Activated naive CD4-positive, alpha-beta T cell treated with anti-CD3 and anti-CD28 coated beads, Interleukin-2, amount 10 ng/mL, durations not matched to agents 7 days and 5 days (primary cell): ENCODE measurements at regions of chr20 and their contacts with region 1.

Region 1: GRCh38 chr20:3820048-3820900 is at the start of gene AP5S1:
- DNase-seq: peak; percentile 95
- H3K4me3 Mint-ChIP-seq: peak within 1 kb of the TSS; percentile 83
- H3K27ac Mint-ChIP-seq: peak within 1 kb of the TSS; percentile 92
- H3K4me1 Mint-ChIP-seq: peaks cover 56% of the 10 kb centered on the region
- H3K27me3 Mint-ChIP-seq: no peaks in the 10 kb centered on the region

Region 2: GRCh38 chr20:3786665-3787323 is 33.5 kb before region 1 on chr20 and contains the start of gene CENPB:
- CTCF ChIA-PET with region 1: interaction called, 52 read pairs
- DNase-seq: peak; percentile 91
- H3K4me3 Mint-ChIP-seq: peak within 1 kb of the TSS; percentile 81
- H3K27ac Mint-ChIP-seq: peak within 1 kb of the TSS; percentile 84
- H3K4me1 Mint-ChIP-seq: peaks cover 52% of the 10 kb centered on the region
- H3K27me3 Mint-ChIP-seq: peaks cover 14% of the 10 kb centered on the region

Region 3: DNA sequence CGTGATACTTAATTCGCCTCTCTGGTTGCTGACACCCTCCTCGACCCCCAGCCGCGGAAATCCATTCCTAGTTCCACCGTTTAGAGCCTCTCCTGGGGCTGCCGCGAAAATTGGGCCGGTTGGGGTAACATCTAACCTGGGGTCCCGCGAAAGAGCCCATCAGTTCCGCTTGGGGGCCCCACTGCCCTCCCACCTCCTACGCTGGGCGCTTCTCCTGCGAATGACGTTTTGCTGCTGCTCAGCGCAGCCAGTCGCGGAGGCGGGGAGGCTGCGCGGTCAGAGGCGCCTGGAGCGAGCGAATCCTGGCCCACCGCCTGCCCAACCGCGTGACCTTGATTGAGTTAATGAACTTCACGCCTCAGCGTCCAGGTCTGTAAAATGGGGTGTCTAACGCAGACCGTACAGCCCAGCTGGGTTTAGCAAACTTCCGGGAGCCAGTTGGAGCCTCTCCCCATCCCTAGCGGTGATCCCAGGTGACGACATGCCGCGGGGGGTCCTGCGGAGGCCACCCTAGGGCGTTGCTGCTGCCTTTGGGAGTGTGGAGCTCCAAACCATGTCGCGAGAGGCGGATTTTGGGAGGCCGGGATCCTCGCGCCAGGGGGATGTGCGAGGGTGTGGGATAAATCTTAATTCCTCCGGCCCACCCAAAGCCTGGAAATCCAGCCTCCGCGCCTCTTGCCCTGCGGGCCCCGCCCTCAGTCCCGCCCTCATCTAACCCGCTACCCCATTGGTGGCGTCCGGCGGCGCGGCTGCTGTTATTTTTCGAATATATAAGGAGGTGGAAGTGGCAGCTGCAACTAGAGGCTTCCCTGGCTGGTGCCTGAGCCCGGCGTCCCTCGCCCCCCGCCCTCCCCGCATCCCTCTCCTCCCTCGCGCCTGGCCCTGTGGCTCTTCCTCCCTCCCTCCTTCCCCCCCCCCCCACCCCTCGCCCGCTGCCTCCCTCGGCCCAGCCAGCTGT is 24.5 kb before region 1 on chr20 and contains the start of gene CDC25B:
- CTCF ChIA-PET with region 1: interaction called, 52 read pairs
- DNase-seq: peak; percentile 97
- H3K4me3 Mint-ChIP-seq: peak within 1 kb of the TSS; percentile 97
- H3K27ac Mint-ChIP-seq: peak within 1 kb of the TSS; percentile 98
- H3K4me1 Mint-ChIP-seq: peaks cover 46% of the 10 kb centered on the region
- H3K27me3 Mint-ChIP-seq: peaks cover 10% of the 10 kb centered on the region

Region 4: DNA sequence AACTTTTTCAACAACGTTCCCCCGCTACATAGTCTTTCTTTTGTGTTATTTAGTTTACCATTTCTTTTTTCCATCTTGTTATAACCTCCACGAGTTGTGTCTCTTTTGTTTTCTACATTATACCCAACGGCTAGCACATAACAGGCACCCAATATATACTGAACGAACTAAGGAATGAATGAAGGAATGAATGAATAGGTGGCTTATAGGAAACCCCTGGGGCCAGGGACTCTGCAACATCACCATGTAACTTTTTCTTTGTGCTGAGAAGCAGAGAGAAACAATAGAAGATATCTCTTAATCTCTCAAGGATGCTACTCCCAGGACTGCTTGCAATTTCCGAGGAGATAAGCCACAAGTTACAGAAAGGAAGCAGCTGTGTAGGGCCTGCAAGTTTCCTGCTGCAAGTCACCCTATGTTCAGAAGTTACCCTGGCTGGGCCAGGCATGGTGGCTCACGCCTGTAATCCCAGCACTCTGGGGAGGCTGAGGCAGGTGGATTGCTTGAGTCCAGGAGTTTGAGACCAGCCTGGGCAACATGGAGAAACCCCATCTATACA is 19.0 kb after region 1 on chr20:
- CTCF ChIA-PET with region 1: interaction called, 10 read pairs
- DNase-seq: no peak
- H3K4me3 Mint-ChIP-seq: no peak overlapping the region
- H3K27ac Mint-ChIP-seq: peak overlapping the region; percentile 26
- H3K4me1 Mint-ChIP-seq: peaks cover 21% of the 10 kb centered on the region
- H3K27me3 Mint-ChIP-seq: no peaks in the 10 kb centered on the region

Region 5: GRCh38 chr20:3854462-3854871 is 34.2 kb after region 1 on chr20:
- CTCF ChIA-PET with region 1: interaction called, 18 read pairs
- DNase-seq: no peak
- H3K4me3 Mint-ChIP-seq: no peak overlapping the region
- H3K27ac Mint-ChIP-seq: no peak overlapping the region
- H3K4me1 Mint-ChIP-seq: peaks cover 8% of the 10 kb centered on the region
- H3K27me3 Mint-ChIP-seq: no peaks in the 10 kb centered on the region